ENCODE measurements at regions of chr17 and their contacts with region 1.

Region 1: DNA sequence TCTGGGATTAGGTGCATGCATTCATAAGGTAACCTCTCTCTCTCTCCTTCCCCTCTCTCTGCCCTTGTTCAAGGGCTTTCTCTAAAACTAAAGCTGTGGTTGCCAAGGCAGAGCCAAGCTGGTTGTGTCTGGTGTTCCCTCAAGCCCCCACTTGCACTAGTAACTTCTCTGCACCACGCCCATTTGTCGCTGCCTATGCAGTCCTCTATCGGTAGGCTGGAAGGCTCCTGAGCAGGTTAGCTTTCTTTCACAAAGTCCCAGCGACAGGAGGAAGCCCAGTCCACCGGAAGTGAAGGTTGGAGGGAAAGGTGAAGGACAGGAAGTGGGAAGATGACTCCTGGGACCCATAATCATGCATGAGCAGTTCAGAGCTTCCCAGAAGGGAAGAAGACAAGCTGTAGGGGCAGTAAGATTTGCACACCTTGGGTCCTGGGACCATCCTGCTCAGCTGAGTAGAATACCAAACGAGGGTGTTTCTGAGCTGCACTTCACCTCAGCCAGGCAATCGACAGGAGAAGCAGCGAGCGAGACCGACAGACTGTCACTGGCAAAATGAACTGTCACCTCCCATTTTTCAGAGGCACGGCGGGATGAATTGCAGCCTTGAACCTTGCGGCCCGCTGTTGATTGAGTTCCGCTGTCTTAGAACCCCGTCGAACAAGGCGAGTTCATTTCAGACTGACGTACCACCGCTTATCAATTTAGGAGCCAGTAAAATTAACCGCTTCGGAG is 14.7 kb upstream of the SKAP1 start:
- DNase-seq: no peak
- H3K4me3 ChIP-seq: no peak overlapping the region
- H3K27ac ChIP-seq: no peak overlapping the region
- H3K4me1 ChIP-seq: no peaks in the 10 kb centered on the region; a peak in 2 of 7 replicates
- H3K27me3 ChIP-seq: no peaks in the 10 kb centered on the region
- CTCF ChIP-seq: no peak
- EP300 ChIP-seq: no peak
- POLR2A ChIP-seq: no peak
- RAD21 ChIP-seq: no peak

Region 2: GRCh38 chr17:48394821-48395220 is 49.9 kb before region 1 on chr17:
- CTCF ChIA-PET with region 1: no interaction called
- POLR2A ChIA-PET with region 1: no interaction called
- DNase-seq: no peak
- H3K4me3 ChIP-seq: no peak overlapping the region
- H3K27ac ChIP-seq: no peak overlapping the region
- H3K4me1 ChIP-seq: no peaks in the 10 kb centered on the region
- H3K27me3 ChIP-seq: no peaks in the 10 kb centered on the region
- CTCF ChIP-seq: no peak
- EP300 ChIP-seq: no peak
- POLR2A ChIP-seq: no peak
- RAD21 ChIP-seq: no peak

Region 3: DNA sequence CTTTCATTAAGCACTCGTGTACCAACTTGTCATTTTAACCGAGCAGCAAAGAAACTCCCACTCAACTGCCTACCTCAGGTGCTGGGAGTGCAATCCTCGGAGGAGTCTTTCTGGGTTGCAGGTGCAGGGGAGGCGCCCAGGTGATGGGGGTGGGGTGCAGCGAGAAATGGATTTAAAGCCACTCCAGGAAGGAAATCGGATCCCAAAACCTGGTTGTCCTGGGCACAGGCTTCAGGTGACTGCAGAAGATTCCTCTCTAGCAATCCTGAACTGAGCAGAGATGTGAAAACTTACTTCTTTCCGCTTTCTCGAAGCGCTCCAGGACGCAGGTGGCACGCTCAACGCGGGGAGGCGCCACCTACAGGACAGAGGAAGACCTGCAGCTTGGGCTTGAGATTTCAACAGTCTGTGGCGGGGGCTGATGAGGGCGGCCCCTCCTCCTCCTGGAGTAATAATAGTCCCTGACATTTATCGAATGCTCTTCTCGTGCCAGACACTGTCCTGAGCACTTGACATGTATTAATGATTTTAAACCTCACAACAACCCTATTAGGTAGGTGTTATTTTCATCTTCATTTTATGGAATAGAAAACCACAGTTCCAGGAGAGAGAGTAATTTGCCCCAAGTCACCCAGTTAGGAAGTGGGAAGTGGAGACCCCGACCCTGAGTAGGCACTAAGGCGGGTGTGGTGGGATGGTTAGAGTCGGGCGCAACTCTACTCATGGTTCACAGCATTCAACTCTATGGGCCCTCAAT is 12.6 kb after region 1 on chr17:
- CTCF ChIA-PET with region 1: interaction called, 13 read pairs
- POLR2A ChIA-PET with region 1: no interaction called
- DNase-seq: peak in 1 of 2 experiments; percentile 85
- H3K4me3 ChIP-seq: peak overlapping the region in 3 of 4 experiments; percentile 31 to 52 (median 51); a peak in 6 of 8 replicates
- H3K27ac ChIP-seq: no peak overlapping the region
- H3K4me1 ChIP-seq: peaks cover 0 to 12% (median 4%) of the 10 kb centered on the region in 4 experiments; a peak in 5 of 7 replicates
- H3K27me3 ChIP-seq: peaks cover 4 to 12% (median 9%) of the 10 kb centered on the region in 4 experiments
- CTCF ChIP-seq: peak; percentile 85 to 97 (median 96)
- EP300 ChIP-seq: no peak
- POLR2A ChIP-seq: no peak
- RAD21 ChIP-seq: peak; percentile 52 to 75

Region 4: DNA sequence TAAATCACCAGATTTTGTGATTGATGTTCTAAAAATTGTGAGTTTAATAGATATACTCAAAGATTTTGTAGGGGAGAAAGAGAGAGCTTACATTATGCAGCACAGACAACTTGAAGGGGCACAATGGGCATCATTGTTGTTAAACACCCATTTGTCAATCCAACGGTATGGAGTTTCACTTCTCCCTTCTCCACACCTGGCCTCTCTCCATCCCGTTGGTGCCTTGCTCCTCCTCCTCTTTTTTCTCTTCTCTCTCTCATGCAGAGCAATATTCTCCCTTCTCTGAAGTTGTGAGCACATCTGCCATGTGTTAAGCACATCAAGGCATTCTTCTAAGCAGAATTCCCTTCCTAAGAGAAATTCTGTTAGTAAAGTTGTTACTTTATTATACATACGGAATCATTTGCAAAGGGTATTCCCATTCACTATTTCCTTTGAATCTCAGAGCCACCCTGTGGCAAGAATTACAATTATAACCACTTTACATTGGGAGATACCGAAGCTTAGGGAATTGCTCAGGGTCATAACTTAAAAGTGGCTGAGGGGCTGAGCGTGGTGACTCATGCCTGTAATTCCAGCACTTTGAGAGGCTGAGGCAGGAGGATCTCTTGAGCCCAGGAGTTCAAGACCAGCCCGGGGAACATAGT is 25.8 kb after region 1 on chr17:
- CTCF ChIA-PET with region 1: no interaction called
- POLR2A ChIA-PET with region 1: no interaction called
- DNase-seq: no peak
- H3K4me3 ChIP-seq: no peak overlapping the region
- H3K27ac ChIP-seq: no peak overlapping the region
- H3K4me1 ChIP-seq: peaks cover 4 to 14% (median 12%) of the 10 kb centered on the region in 4 experiments; a peak in 6 of 7 replicates
- H3K27me3 ChIP-seq: peaks cover 0 to 3% (median 0%) of the 10 kb centered on the region in 4 experiments; a peak in 1 of 7 replicates
- CTCF ChIP-seq: no peak
- EP300 ChIP-seq: no peak
- POLR2A ChIP-seq: no peak
- RAD21 ChIP-seq: no peak

Region 5: GRCh38 chr17:48483471-48484131 is 38.9 kb after region 1 on chr17:
- CTCF ChIA-PET with region 1: no interaction called
- POLR2A ChIA-PET with region 1: no interaction called
- DNase-seq: no peak
- H3K4me3 ChIP-seq: no peak overlapping the region
- H3K27ac ChIP-seq: no peak overlapping the region
- H3K4me1 ChIP-seq: peaks cover 0 to 2% (median 0%) of the 10 kb centered on the region in 4 experiments; a peak in 1 of 7 replicates
- H3K27me3 ChIP-seq: peaks cover 0 to 5% (median 2%) of the 10 kb centered on the region in 4 experiments; a peak in 3 of 7 replicates
- CTCF ChIP-seq: no peak
- EP300 ChIP-seq: no peak
- POLR2A ChIP-seq: no peak
- RAD21 ChIP-seq: no peak